HEK293 (cell line): ENCODE measurements at regions of chr6 and their contacts with region 1.

Region 1: GRCh38 chr6:108541838-108542759 is 18.6 kb upstream of the FOXO3 start:
- H3K4me3 ChIP-seq: no peak overlapping the region
- H3K27ac ChIP-seq: no peak overlapping the region
- H3K4me1 ChIP-seq: no peaks in the 10 kb centered on the region
- CTCF ChIP-seq: peak; percentile 92

Region 2: GRCh38 chr6:108510461-108511319 is 31.4 kb before region 1 on chr6:
- CTCF ChIA-PET with region 1: no interaction called
- POLR2A ChIA-PET with region 1: no interaction called
- H3K4me3 ChIP-seq: no peak overlapping the region
- H3K27ac ChIP-seq: no peak overlapping the region
- H3K4me1 ChIP-seq: no peaks in the 10 kb centered on the region
- CTCF ChIP-seq: no peak

Region 3: DNA sequence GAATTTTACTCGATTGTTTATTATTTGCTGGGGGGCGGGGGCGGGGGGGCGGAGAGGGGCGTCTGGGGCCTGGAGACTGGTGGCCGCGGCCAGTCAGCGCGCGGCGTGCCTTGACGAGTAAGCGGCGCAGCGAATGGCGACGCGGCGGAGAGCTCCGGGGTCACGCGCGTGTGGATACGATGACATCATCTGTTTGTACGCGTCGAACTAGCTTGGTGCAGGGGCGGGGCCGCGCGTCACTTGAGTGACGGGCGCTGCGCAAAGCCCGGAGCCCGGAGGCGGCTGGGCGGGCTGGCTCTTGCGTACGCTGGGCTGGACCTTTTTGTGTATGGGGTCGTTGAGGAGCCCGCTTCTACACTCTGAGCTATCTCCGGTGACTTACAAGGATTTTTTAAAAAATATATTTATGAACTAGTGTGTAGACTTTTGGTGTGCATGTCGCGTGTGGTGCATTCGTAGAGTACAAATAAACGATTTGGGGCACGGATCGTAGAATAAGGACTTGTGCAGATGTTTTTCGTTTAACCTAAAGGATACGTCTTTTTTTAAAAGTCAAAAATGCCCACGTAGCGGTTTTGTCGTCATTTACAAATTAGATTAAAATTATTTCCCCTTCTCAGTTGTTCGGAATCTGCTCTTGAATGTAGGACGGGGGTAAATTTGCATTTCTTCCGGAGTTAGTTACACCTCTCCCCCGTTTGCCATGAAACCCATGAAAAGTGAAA is 16.4 kb after region 1 on chr6:
- CTCF ChIA-PET with region 1: interaction called, 73 read pairs
- POLR2A ChIA-PET with region 1: interaction called, 6 read pairs
- H3K4me3 ChIP-seq: peak overlapping the region; percentile 85
- H3K27ac ChIP-seq: peak overlapping the region; percentile 100
- H3K4me1 ChIP-seq: peaks cover 7% of the 10 kb centered on the region
- CTCF ChIP-seq: no peak

Region 4: DNA sequence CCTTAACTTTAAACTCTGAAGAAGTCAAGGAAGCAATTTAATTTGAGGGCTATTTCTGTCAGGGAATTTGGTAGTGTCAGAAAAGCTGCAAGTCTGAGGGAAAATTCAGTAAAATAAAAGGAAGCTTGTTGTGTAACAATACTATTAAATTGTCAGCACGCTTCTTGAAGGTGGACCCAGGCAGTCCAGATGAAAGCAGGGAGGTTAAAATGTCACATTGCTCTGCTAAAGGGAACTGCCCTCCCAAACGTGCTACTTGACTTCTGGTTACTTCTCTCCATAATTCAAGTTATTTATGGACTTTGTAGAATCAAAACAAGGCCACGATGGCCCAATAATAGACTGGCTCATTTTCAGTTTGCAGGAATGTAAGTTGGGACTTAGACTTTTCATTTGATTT is 277.9 kb after region 1 on chr6:
- CTCF ChIA-PET with region 1: interaction called, 10 read pairs
- POLR2A ChIA-PET with region 1: no interaction called
- H3K4me3 ChIP-seq: no peak overlapping the region
- H3K27ac ChIP-seq: no peak overlapping the region
- H3K4me1 ChIP-seq: no peaks in the 10 kb centered on the region
- CTCF ChIP-seq: no peak

Region 5: DNA sequence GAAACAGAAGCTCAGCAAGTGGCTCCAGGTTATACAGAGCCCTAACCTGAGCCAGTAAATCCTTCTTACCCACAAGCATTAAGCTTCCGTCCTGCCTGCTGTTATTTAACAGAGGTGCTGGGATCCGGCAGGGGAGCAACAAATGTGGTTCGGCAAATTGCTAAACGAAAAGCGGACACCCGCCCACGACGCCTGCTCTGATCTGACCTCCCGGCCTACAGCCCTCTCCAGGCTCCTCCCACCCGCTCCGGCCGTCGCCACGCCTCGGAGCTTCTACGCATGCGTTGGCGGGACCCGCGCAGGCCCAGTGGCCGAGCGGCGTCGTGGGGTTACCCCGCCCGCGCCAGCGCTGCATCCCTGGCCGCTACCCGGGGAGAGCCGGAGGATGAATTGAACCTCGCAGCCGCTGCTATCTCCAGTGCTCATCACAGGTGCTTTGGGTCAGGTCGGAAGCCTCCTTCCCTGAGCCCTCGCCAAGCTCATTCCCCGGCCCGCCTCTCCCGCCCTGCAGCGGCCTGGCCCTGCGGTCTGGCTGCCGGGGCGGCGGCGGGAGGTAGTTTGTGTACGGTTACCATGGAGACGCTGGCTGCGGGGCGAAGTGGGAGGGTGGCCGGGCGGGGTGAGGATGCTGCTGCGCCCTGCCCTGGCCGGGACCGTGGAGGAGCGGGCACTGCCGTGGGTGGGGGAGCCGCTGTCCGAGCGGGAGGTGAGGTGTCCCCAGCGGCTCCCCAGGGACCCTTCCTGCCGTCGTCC is 306.2 kb after region 1 on chr6 and contains the start of gene ARMC2:
- CTCF ChIA-PET with region 1: interaction called, 14 read pairs
- POLR2A ChIA-PET with region 1: interaction called, 5 read pairs
- H3K4me3 ChIP-seq: peak within 1 kb of the TSS; percentile 72
- H3K27ac ChIP-seq: no peak within 1 kb of the TSS; the same call in 1 of the 2 replicates
- H3K4me1 ChIP-seq: peaks cover 4% of the 10 kb centered on the region; the same call in 1 of the 2 replicates
- CTCF ChIP-seq: no peak

Region 6: GRCh38 chr6:108968325-108969316 is 426.5 kb after region 1 on chr6:
- CTCF ChIA-PET with region 1: interaction called, 10 read pairs
- POLR2A ChIA-PET with region 1: no interaction called
- H3K4me3 ChIP-seq: no peak overlapping the region
- H3K27ac ChIP-seq: no peak overlapping the region
- H3K4me1 ChIP-seq: peaks cover 12% of the 10 kb centered on the region
- CTCF ChIP-seq: no peak